Activated B cell treated with CpG ODN at 0.5 μM for 24 hours (primary cell): ENCODE measurements at regions of chr10 and their contacts with region 1.

Region 1: GRCh38 chr10:92592761-92593618 is at the start of gene KIF11:
- DNase-seq: peak; percentile 92
- ATAC-seq: peak; percentile 85
- H3K4me3 Mint-ChIP-seq: peak within 1 kb of the TSS; percentile 96
- H3K27ac Mint-ChIP-seq: peak within 1 kb of the TSS; percentile 99
- H3K4me1 Mint-ChIP-seq: peaks cover 36% of the 10 kb centered on the region
- H3K27me3 Mint-ChIP-seq: no peaks in the 10 kb centered on the region
- CTCF ChIP-seq: no peak
- total RNA-seq, gene KIF11: 2.2 and 2.5 TPM in 2 replicates

Region 2: DNA sequence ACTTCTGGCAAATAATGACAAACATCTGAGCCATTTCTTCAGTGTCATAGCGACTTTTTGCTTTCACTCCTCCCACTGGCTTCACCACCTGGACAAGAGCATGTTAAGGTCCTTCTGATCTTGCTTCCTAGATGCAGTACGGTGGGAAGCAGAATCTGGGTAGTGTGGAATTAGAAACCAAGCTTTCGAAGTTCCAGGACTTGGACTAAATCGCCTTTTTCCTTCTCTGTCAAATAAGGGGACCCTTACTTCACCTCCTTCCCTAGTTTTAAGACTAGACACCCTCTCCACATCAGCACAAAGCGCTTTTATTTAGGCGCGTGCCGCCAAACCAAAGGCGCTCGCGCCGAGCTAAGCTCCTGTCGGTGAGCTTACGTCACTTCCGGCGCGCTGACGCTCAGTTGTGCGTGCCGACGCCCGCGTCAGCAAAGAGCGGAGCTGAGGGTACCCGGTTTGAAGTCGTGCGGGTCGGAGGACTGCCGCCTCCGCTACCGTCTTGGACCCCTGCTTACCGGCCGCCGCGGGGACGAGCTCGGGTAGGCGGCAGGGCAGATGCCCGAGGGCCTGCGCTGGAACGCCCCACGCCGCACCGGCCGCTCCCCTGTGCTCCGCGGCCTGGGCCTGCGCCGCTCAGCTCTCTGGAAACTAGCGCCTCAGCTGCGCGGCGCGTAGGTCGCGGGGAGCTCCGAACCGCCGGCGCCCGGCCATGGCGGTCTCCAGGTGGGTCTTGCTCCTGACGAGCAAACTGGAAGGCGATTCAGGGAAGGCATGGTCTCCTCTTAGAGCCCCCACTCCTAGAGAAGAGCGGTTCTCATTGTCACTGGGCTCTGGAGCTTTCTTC is 669.4 kb before region 1 on chr10 and contains the start of gene BTAF1:
- CTCF ChIA-PET with region 1: no interaction called
- POLR2A ChIA-PET with region 1: no interaction called
- intact Hi-C with region 1: loop called (anchors 5 kb)
- DNase-seq: peak; percentile 91
- ATAC-seq: peak; percentile 94
- H3K4me3 Mint-ChIP-seq: peak within 1 kb of the TSS; percentile 92
- H3K27ac Mint-ChIP-seq: peak within 1 kb of the TSS; percentile 96
- H3K4me1 Mint-ChIP-seq: peaks cover 42% of the 10 kb centered on the region
- H3K27me3 Mint-ChIP-seq: no peaks in the 10 kb centered on the region
- CTCF ChIP-seq: no peak
- total RNA-seq, gene BTAF1: 63.4 and 74.7 TPM in 2 replicates

Region 3: DNA sequence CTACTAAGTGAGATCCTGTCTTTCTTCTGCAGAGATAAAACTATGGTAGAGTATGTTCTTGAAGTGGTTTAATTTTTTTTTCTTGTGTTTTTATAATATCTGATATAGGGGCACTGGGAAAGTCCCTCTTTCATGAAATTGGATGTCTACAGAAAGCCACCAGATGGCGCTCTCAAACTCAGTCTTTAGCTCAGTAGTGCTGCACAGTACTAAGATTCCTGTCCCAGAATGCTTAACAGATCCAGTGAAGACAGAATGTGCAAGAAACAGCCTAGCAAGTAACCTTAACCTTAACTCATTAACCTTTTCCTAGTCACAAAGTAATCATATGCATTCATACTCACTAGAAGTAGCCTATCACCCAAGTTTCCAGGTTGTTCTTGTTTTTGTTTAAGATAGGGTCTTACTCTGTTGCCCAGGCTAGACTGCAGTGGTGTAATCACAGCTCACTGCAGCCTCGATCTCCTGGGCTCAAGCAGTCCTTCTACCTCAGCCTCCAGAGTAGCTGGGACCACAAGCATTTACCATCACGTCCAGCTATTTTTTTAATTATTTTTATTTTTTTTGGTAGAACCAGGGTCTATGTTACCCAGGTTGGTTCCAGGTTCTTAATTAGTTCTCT is 75.8 kb before region 1 on chr10:
- CTCF ChIA-PET with region 1: interaction called, 8 read pairs
- POLR2A ChIA-PET with region 1: interaction called, 7 read pairs
- intact Hi-C with region 1: loop called (anchors 1 kb)
- DNase-seq: no peak
- ATAC-seq: peak; percentile 88
- H3K4me3 Mint-ChIP-seq: no peak overlapping the region
- H3K27ac Mint-ChIP-seq: no peak overlapping the region
- H3K4me1 Mint-ChIP-seq: peaks cover 6% of the 10 kb centered on the region
- H3K27me3 Mint-ChIP-seq: no peaks in the 10 kb centered on the region
- CTCF ChIP-seq: peak; percentile 30

Region 4: GRCh38 chr10:92689663-92690210 is 96.7 kb after region 1 on chr10 and contains the start of gene HHEX:
- CTCF ChIA-PET with region 1: interaction called, 14 read pairs
- POLR2A ChIA-PET with region 1: interaction called, 85 read pairs
- intact Hi-C with region 1: loop called (anchors 1 kb)
- DNase-seq: peak; percentile 79
- ATAC-seq: peak; percentile 75
- H3K4me3 Mint-ChIP-seq: peak within 1 kb of the TSS; percentile 86
- H3K27ac Mint-ChIP-seq: peak within 1 kb of the TSS; percentile 92
- H3K4me1 Mint-ChIP-seq: peaks cover 45% of the 10 kb centered on the region
- H3K27me3 Mint-ChIP-seq: no peaks in the 10 kb centered on the region
- CTCF ChIP-seq: no peak
- total RNA-seq, gene HHEX: 50.3 and 55.1 TPM in 2 replicates

Region 5: GRCh38 chr10:92757066-92757710 is 164.2 kb after region 1 on chr10:
- CTCF ChIA-PET with region 1: interaction called, 3 read pairs
- POLR2A ChIA-PET with region 1: interaction called, 22 read pairs
- intact Hi-C with region 1: loop called (anchors 1 kb)
- DNase-seq: peak; percentile 47
- ATAC-seq: peak; percentile 62
- H3K4me3 Mint-ChIP-seq: peak overlapping the region; percentile 76
- H3K27ac Mint-ChIP-seq: peak overlapping the region; percentile 96
- H3K4me1 Mint-ChIP-seq: peaks cover 83% of the 10 kb centered on the region
- H3K27me3 Mint-ChIP-seq: no peaks in the 10 kb centered on the region
- CTCF ChIP-seq: no peak

Region 6: DNA sequence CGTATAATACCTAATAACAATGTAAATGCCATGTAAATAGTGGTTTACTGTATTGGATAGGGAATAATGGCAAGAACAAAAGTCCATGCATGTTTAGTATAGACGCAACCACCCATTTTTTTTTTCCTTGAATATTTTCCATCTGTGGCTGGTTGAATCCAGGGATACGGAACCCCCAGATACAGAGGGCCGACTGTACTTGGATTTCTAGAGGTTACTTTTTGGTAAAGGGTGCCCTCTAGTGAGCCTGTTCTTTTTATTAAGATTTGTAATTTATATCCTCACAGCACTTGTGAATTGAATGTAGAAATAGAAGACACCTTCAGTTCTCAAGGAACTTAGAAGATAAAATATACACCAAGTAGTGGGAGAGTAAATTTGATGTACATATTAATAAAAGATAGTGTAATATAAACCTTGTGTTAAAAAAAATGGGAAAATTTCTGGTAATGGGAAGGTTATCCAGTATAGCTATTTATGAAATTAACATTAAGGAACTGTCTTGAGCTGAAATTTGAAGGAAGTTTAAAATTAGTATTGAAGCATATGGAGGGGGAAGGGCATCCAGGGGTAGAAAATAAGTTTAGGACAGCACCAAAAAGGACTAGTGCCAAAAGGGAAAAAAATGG is 287.4 kb after region 1 on chr10:
- CTCF ChIA-PET with region 1: interaction called, 11 read pairs
- POLR2A ChIA-PET with region 1: interaction called, 5 read pairs
- intact Hi-C with region 1: loop called (anchors 1 kb)
- DNase-seq: no peak
- ATAC-seq: peak; percentile 70
- H3K4me3 Mint-ChIP-seq: no peak overlapping the region
- H3K27ac Mint-ChIP-seq: no peak overlapping the region
- H3K4me1 Mint-ChIP-seq: peaks cover 23% of the 10 kb centered on the region
- H3K27me3 Mint-ChIP-seq: no peaks in the 10 kb centered on the region
- CTCF ChIP-seq: no peak